CD14-positive monocyte (primary cell): ENCODE measurements at regions of chr19 and their contacts with region 1.

Region 1: DNA sequence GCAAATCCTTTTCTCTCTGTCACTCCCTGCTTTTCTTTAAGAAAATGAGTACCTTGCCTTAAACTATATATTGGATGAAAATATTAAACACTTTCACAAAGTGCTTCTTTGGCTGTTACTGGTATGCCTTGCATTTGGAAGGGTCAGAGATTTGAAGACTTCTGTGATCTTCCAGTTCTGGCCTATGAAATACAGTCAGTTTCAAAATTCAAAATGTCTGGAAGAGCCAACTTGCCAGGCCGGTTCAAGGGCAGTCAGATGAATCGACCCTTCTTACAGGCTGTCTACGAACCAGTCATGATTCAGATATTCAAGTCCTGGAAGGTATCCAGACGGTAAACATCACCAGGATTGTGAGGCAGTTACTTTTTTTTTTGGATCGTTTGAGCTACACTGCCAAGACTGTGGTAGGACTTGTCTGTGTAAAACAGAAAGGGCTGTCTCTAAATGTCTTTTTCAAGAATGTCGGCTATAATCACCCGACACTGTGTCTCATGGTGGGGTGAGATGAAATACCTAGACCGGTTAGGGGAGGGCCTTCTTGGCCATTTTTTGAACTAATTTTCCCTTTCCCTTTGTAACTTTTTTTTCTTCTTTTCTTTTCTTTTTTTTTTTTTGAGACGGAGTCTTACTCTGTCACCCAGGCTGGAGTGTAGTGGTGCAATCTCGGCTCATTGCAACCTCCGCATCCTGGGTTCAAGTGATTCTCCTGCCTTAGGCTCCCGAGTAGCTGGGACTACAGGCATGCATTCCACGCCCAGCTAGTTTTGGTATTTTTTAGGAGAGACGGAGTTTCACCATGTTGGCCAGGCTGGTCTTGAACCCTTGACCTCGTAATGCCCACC is 11.2 kb downstream of the ACTN4 start:
- DNase-seq: no peak
- H3K4me3 ChIP-seq: no peak overlapping the region
- H3K4me3 Mint-ChIP-seq: no peak overlapping the region
- H3K27ac ChIP-seq: peak overlapping the region in 1 of 2 donors; percentile 43
- H3K27ac Mint-ChIP-seq: peak overlapping the region in 5 of 7 donors; percentile 8 to 79 (median 53)
- H3K4me1 ChIP-seq: peaks cover 37 to 58% of the 10 kb centered on the region in 2 donors
- H3K4me1 Mint-ChIP-seq: peaks cover 59% of the 10 kb centered on the region
- H3K27me3 ChIP-seq: no peaks in the 10 kb centered on the region
- H3K27me3 Mint-ChIP-seq: no peaks in the 10 kb centered on the region
- CTCF ChIP-seq: no peak

Region 2: DNA sequence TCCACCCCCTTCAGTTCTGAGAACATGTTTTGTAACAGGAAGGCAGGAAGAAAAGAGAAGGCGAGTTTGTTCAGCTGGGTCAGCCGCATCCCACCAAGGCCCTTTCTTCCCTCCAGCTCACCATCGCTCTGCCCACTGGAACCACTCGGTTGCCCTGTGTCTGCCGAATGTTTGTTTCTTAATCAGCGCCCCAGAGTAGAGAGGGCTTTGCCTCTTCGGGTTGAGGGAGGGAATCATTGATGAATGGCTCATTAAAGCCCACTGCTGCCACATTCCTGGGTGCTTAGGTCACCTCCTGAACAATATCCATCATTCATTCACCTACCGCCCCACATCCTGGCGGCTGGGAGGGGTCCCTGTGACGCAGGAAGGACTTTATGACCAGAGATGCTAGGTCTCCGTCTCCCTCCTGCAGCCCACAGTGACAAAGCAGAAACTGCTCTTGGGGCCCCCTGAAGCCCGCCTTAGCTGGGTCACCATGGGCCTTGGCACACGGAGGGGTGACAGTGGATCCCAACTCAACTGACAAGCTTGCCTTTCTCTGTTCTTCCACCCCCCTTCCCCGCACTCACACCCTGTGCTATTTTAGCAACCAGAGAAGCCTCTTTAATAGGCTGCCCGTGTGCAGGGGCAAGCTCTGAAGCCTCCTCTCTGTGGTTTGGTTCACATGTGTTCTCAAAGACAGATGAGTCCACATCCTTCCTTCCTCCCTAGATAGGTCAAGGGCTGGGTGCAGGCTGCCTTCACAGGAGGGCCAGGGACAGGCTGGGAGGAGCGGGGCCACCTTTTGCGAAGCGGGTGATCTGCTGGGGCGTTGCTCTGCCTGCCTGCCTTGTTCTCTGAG is 34.9 kb after region 1 on chr19:
- intact Hi-C with region 1: loop called in 1 of 2 experiments (anchors 5 kb)
- DNase-seq: peak in 2 of 3 donors; percentile 32 to 35
- H3K4me3 ChIP-seq: peak overlapping the region in 1 of 3 experiments; percentile 52
- H3K4me3 Mint-ChIP-seq: peak overlapping the region; percentile 51 to 70
- H3K27ac ChIP-seq: peak overlapping the region; percentile 63 to 79
- H3K27ac Mint-ChIP-seq: peak overlapping the region; percentile 77 to 96 (median 82)
- H3K4me1 ChIP-seq: peaks cover 65 to 72% of the 10 kb centered on the region in 2 donors
- H3K4me1 Mint-ChIP-seq: peaks cover 84% of the 10 kb centered on the region
- H3K27me3 ChIP-seq: no peaks in the 10 kb centered on the region
- H3K27me3 Mint-ChIP-seq: no peaks in the 10 kb centered on the region
- CTCF ChIP-seq: no peak